ENCODE measurements at regions of chr3 and their contacts with region 1.

Region 1: GRCh38 chr3:20905210-20905805 is 719.3 kb upstream of the SGO1 start:
- DNase-seq: peak; percentile 24 to 76 (median 36)
- ATAC-seq: peak; percentile 81
- H3K4me3 ChIP-seq: peak overlapping the region; percentile 15; the same call in 1 of the 2 replicates
- H3K27ac ChIP-seq: peak overlapping the region; percentile 77
- H3K4me1 ChIP-seq: peaks cover 0 to 4% of the 10 kb centered on the region in 2 experiments; a peak in 2 of 5 replicates
- H3K27me3 ChIP-seq: no peaks in the 10 kb centered on the region
- CTCF ChIP-seq: no peak
- EP300 ChIP-seq: peak; percentile 78
- POLR2A ChIP-seq: no peak
- RAD21 ChIP-seq: no peak

Region 2: DNA sequence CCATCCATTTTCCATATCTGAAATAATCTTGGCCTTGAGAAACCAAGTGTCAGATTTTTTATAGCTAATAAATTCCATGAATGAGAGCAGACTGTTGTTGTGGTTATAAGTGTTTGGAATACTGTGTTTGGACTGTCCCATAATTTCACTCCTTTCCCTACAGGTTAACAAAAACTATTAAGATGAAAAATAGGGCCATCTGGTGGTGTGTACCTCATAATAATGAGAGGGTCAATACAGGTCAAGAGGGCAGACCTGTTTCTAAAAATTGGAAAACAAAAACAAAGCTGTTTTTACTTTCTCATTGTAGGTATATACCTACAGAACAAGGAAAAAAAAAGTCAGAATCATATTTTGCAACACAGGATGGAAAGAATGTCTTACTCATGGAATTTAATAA is 165.5 kb before region 1 on chr3:
- CTCF ChIA-PET with region 1: no interaction called
- POLR2A ChIA-PET with region 1: no interaction called
- in situ Hi-C with region 1: no loop called
- intact Hi-C with region 1: loop called (anchors 5 kb)
- DNase-seq: peak in 1 of 4 experiments; percentile 5
- ATAC-seq: no peak
- H3K4me3 ChIP-seq: no peak overlapping the region
- H3K27ac ChIP-seq: no peak overlapping the region
- H3K4me1 ChIP-seq: no peaks in the 10 kb centered on the region
- H3K27me3 ChIP-seq: no peaks in the 10 kb centered on the region
- CTCF ChIP-seq: no peak
- EP300 ChIP-seq: no peak
- POLR2A ChIP-seq: no peak
- RAD21 ChIP-seq: peak in 1 of 2 experiments; percentile 36; a peak in 1 of 4 replicates

Region 3: DNA sequence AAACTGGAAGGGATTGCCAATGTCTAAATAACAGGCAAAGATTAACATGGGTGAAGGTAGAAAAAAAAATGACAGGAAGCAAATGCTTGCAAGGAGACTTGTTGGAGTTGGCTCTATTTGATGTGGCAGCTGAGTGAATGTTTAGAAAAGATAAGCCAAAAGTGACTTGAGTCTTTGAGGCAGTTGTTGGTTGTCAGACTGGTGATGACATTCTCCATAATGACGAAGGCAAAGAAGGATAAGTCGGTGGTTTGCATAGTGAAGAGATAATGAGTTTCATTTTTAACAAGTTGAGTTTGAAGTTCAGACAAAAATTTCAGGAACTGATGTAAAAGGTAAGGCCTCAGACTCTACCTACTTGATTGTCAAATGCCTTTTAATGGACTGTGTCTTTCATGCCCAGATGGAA is 15.2 kb before region 1 on chr3:
- CTCF ChIA-PET with region 1: no interaction called
- POLR2A ChIA-PET with region 1: interaction called, 3 read pairs
- in situ Hi-C with region 1: no loop called
- intact Hi-C with region 1: loop called (anchors 1 kb)
- DNase-seq: peak; percentile 28 to 91 (median 50)
- ATAC-seq: peak; percentile 86
- H3K4me3 ChIP-seq: peak overlapping the region; percentile 24; the same call in 1 of the 2 replicates
- H3K27ac ChIP-seq: peak overlapping the region; percentile 90
- H3K4me1 ChIP-seq: peaks cover 0 to 4% of the 10 kb centered on the region in 2 experiments; a peak in 2 of 5 replicates
- H3K27me3 ChIP-seq: no peaks in the 10 kb centered on the region
- CTCF ChIP-seq: no peak
- EP300 ChIP-seq: peak; percentile 88
- POLR2A ChIP-seq: peak; percentile 64; the same call in 1 of the 2 replicates
- RAD21 ChIP-seq: 0 out of 4 replicates have a peak, but pooled peaks of 1 of the 2 experiments have one; percentile 7

Region 4: GRCh38 chr3:20984594-20985205 is 79.4 kb after region 1 on chr3:
- CTCF ChIA-PET with region 1: no interaction called
- POLR2A ChIA-PET with region 1: no interaction called
- in situ Hi-C with region 1: no loop called
- intact Hi-C with region 1: no loop called
- DNase-seq: no peak
- ATAC-seq: no peak
- H3K4me3 ChIP-seq: no peak overlapping the region
- H3K27ac ChIP-seq: no peak overlapping the region
- H3K4me1 ChIP-seq: no peaks in the 10 kb centered on the region
- H3K27me3 ChIP-seq: no peaks in the 10 kb centered on the region
- CTCF ChIP-seq: no peak
- EP300 ChIP-seq: no peak
- POLR2A ChIP-seq: no peak
- RAD21 ChIP-seq: no peak

Measured in K562 (cell line).